Activated CD4-positive, alpha-beta memory T cell treated with anti-CD3 and anti-CD28 coated beads, Interleukin-2, amount 10 ng/mL, durations not matched to agents 7 days and 5 days (primary cell): ENCODE measurements at regions of chr22 and their contacts with region 1.

Region 1: GRCh38 chr22:36470162-36470993 is 11.1 kb downstream of the TXN2 start:
- DNase-seq: peak; percentile 87
- H3K4me3 Mint-ChIP-seq: no peak overlapping the region
- H3K27ac Mint-ChIP-seq: peak overlapping the region; percentile 73
- H3K4me1 Mint-ChIP-seq: peaks cover 31% of the 10 kb centered on the region
- H3K27me3 Mint-ChIP-seq: no peaks in the 10 kb centered on the region

Region 2: GRCh38 chr22:36180038-36180880 is 290.1 kb before region 1 on chr22:
- CTCF ChIA-PET with region 1: no interaction called
- POLR2A ChIA-PET with region 1: no interaction called
- DNase-seq: peak; percentile 85
- H3K4me3 Mint-ChIP-seq: no peak overlapping the region
- H3K27ac Mint-ChIP-seq: no peak overlapping the region
- H3K4me1 Mint-ChIP-seq: peaks cover 2% of the 10 kb centered on the region
- H3K27me3 Mint-ChIP-seq: peaks cover 3% of the 10 kb centered on the region

Region 3: DNA sequence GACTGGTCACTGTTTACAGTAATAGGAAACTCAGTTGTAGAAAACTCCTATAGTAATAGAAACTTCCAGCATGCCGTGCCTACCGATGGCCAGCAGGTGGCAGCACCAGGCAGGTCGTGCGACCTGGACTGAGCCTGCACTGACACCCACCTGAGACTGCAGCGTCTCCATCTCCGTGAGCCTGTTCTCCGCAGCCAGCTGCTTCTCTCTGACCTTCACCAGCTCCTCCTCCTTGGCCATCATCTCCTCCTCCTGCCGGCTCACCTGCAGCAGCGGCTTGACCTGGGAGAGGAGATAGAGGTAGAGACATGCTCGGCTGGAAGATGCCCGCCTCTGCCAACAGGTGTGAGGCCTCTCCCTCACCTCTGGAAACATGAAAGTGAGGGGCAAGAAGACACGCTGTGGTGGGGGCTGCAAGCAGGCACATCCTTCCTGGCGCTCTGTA is 169.0 kb before region 1 on chr22:
- CTCF ChIA-PET with region 1: interaction called, 43 read pairs
- POLR2A ChIA-PET with region 1: interaction called, 3 read pairs
- DNase-seq: peak; percentile 84
- H3K4me3 Mint-ChIP-seq: no peak overlapping the region
- H3K27ac Mint-ChIP-seq: peak overlapping the region; percentile 54
- H3K4me1 Mint-ChIP-seq: peaks cover 16% of the 10 kb centered on the region
- H3K27me3 Mint-ChIP-seq: no peaks in the 10 kb centered on the region

Region 4: GRCh38 chr22:36359181-36359996 is 111.0 kb before region 1 on chr22:
- CTCF ChIA-PET with region 1: interaction called, 11 read pairs
- POLR2A ChIA-PET with region 1: interaction called, 6 read pairs
- DNase-seq: no peak
- H3K4me3 Mint-ChIP-seq: peak overlapping the region; percentile 7
- H3K27ac Mint-ChIP-seq: peak overlapping the region; percentile 79
- H3K4me1 Mint-ChIP-seq: peaks cover 97% of the 10 kb centered on the region
- H3K27me3 Mint-ChIP-seq: no peaks in the 10 kb centered on the region

Region 5: GRCh38 chr22:36379593-36380361 is 90.6 kb before region 1 on chr22:
- CTCF ChIA-PET with region 1: interaction called, 22 read pairs
- POLR2A ChIA-PET with region 1: interaction called, 5 read pairs
- DNase-seq: peak; percentile 72
- H3K4me3 Mint-ChIP-seq: peak overlapping the region; percentile 75
- H3K27ac Mint-ChIP-seq: peak overlapping the region; percentile 98
- H3K4me1 Mint-ChIP-seq: peaks cover 96% of the 10 kb centered on the region
- H3K27me3 Mint-ChIP-seq: no peaks in the 10 kb centered on the region

Region 6: GRCh38 chr22:36405671-36406538 is 64.5 kb before region 1 on chr22:
- CTCF ChIA-PET with region 1: interaction called, 11 read pairs
- POLR2A ChIA-PET with region 1: interaction called, 4 read pairs
- DNase-seq: peak; percentile 80
- H3K4me3 Mint-ChIP-seq: peak overlapping the region; percentile 22
- H3K27ac Mint-ChIP-seq: peak overlapping the region; percentile 99
- H3K4me1 Mint-ChIP-seq: peaks cover 68% of the 10 kb centered on the region
- H3K27me3 Mint-ChIP-seq: no peaks in the 10 kb centered on the region